GM18951 (cell line): ENCODE measurements at regions of chr1 and their contacts with region 1.

Region 1: DNA sequence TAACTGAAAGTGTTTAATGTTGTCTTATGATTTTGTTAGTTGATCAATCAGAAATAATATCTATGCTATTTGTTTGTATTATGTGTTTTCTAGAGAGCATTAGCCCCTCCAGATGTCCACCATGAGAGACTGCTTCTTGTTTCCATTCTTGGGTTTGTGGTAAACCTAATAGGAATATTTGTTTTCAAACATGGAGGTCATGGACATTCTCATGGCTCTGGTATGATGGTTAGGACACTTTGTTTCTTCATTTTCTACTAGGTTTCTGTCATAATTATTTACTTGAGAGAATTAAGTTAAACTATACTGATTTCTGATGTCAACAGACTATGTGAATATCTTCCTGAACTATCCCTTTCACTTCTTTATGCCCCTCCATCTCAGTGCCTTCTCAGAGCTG is 16.1 kb downstream of the SLC30A7 start:
- POLR2A ChIP-seq: no peak

Region 2: GRCh38 chr1:100719490-100719889 is 192.5 kb before region 1 on chr1 and contains the start of gene VCAM1:
- in situ Hi-C with region 1: no loop called
- POLR2A ChIP-seq: no peak

Region 3: GRCh38 chr1:101444873-101445618 is 533.0 kb after region 1 on chr1:
- in situ Hi-C with region 1: loop called (anchors 10 kb)
- POLR2A ChIP-seq: no peak

Region 4: GRCh38 chr1:101540161-101540560 is 628.1 kb after region 1 on chr1:
- in situ Hi-C with region 1: no loop called
- POLR2A ChIP-seq: no peak